ENCODE measurements at regions of chr10 and their contacts with region 1.

Region 1: GRCh38 chr10:68301790-68302502 is 29.9 kb upstream of the HNRNPH3 start:
- DNase-seq: peak; percentile 58
- H3K4me3 Mint-ChIP-seq: no peak overlapping the region
- H3K27ac Mint-ChIP-seq: no peak overlapping the region
- H3K4me1 Mint-ChIP-seq: no peaks in the 10 kb centered on the region
- H3K27me3 Mint-ChIP-seq: no peaks in the 10 kb centered on the region
- CTCF ChIP-seq: peak; percentile 56

Region 2: DNA sequence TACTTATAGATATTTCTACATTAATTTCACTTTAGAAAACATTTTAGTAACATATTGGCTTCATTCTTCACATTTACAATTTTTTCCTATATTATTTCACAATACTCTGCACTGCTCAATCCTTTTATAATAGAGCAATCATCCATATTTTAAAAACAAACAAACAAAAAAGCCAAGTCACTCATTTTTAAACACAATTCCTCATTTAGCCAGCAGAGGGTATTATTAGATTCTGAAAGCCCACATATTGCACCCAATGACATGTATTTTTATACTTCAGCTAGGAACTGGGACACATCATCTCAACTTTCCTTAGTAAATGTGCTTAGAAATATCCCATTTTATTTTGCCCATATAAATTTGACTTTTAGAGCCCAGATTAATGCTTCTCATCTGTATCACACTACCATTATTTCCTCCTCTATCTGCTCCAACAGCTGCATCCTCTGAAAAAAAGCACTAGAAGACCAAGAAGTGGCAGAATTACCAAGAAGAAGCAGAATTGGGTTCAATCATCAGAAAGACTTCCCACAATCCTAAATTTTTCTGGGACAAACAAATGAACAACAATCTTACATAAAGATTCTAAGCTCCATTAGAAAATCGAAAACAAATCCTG is 635.4 kb before region 1 on chr10:
- CTCF ChIA-PET with region 1: no interaction called
- POLR2A ChIA-PET with region 1: no interaction called
- intact Hi-C with region 1: no loop called
- DNase-seq: peak; percentile 47
- H3K4me3 Mint-ChIP-seq: no peak overlapping the region
- H3K27ac Mint-ChIP-seq: no peak overlapping the region
- H3K4me1 Mint-ChIP-seq: no peaks in the 10 kb centered on the region
- H3K27me3 Mint-ChIP-seq: peaks cover 17% of the 10 kb centered on the region
- CTCF ChIP-seq: peak; percentile 31

Region 3: DNA sequence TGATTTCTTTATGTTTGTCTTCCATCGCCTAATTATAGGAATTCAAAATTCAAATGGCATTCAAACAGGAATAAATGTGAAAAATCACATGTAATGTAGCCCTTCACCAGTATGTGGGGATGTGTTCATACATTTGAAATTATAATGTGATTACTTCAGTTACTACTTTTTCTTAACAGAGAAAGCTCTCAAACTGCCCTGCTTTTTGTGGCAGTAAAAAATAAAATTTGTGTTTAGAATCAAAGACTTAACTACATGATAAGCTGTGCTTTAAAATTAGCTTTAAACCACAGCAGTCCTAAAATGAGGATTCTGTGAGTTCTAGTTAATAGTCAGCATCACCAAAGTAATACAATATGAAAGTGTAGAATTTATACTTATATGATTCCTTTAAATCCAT is 219.1 kb before region 1 on chr10:
- CTCF ChIA-PET with region 1: interaction called, 26 read pairs
- POLR2A ChIA-PET with region 1: interaction called, 3 read pairs
- intact Hi-C with region 1: loop called (anchors 1 kb)
- DNase-seq: peak; percentile 51
- H3K4me3 Mint-ChIP-seq: no peak overlapping the region
- H3K27ac Mint-ChIP-seq: no peak overlapping the region
- H3K4me1 Mint-ChIP-seq: peaks cover 15% of the 10 kb centered on the region
- H3K27me3 Mint-ChIP-seq: no peaks in the 10 kb centered on the region
- CTCF ChIP-seq: peak; percentile 40

Region 4: DNA sequence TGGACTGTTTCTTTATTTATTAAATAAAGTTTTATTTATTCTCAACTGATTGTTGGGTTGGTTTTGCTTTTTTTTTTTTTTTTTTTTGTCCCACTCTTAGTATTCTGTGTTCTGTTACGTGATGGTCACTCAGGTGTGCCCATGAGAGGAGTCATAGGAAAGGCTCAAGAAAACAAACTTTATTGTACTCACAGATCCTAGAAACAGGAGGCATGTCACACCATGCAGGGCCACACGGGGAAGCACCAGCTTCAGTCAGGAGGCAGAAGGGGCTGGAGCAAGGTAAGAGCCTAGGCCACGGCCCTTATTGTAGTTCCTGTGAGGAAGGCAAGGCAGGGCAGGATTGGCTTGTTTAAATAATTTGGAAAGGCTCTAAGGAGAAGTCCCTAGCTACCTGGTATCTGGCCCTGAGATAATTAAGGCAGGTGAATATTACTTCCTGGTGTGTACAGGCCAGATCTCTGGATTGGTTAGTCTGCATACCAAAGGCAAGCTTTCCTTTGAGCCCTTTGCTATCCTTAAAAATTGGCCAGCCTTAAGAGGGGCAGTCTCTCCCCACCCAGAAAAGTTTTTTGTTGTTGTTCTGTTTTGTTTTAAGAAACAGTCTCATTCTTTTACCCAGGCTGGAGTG is 78.3 kb before region 1 on chr10:
- CTCF ChIA-PET with region 1: interaction called, 14 read pairs
- POLR2A ChIA-PET with region 1: no interaction called
- intact Hi-C with region 1: no loop called
- DNase-seq: no peak
- H3K4me3 Mint-ChIP-seq: no peak overlapping the region
- H3K27ac Mint-ChIP-seq: no peak overlapping the region
- H3K4me1 Mint-ChIP-seq: peaks cover 6% of the 10 kb centered on the region
- H3K27me3 Mint-ChIP-seq: no peaks in the 10 kb centered on the region
- CTCF ChIP-seq: no peak

Region 5: GRCh38 chr10:68315582-68315981 is 13.6 kb after region 1 on chr10:
- CTCF ChIA-PET with region 1: interaction called, 27 read pairs
- POLR2A ChIA-PET with region 1: interaction called, 3 read pairs
- intact Hi-C with region 1: no loop called
- DNase-seq: no peak
- H3K4me3 Mint-ChIP-seq: no peak overlapping the region
- H3K27ac Mint-ChIP-seq: no peak overlapping the region
- H3K4me1 Mint-ChIP-seq: peaks cover 6% of the 10 kb centered on the region
- H3K27me3 Mint-ChIP-seq: no peaks in the 10 kb centered on the region
- CTCF ChIP-seq: no peak

Region 6: GRCh38 chr10:68342909-68343516 is 41.1 kb after region 1 on chr10:
- CTCF ChIA-PET with region 1: no interaction called
- POLR2A ChIA-PET with region 1: no interaction called
- intact Hi-C with region 1: no loop called
- DNase-seq: no peak
- H3K4me3 Mint-ChIP-seq: no peak overlapping the region
- H3K27ac Mint-ChIP-seq: no peak overlapping the region
- H3K4me1 Mint-ChIP-seq: peaks cover 12% of the 10 kb centered on the region
- H3K27me3 Mint-ChIP-seq: no peaks in the 10 kb centered on the region
- CTCF ChIP-seq: no peak

Measured in MCF 10A (cell line).